ENCODE measurements at regions of chrX and their contacts with region 1.

Region 1: DNA sequence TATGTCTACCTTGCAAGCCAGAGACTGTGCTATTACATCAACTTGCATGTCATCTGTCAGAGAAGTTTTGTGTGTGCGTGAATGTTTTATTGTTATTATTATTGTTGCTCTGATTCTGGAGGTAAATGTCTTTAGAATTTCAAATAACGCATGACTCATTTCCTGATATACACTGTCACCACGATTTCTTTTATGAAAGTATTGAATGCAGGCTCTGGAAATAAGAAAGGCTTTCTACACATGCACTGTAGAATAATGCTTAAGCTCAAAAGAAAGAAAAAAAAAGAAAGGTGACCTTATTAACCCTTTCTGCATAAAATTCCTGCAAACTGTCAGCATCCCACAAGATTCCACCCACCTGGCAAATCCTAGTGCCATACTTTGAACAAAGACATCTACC is 632.9 kb downstream of the ZNF674 start:
- DNase-seq: no peak
- H3K4me3 ChIP-seq: no peak overlapping the region
- H3K27ac ChIP-seq: no peak overlapping the region
- H3K4me1 ChIP-seq: no peaks in the 10 kb centered on the region
- H3K27me3 ChIP-seq: peaks cover 0 to 28% of the 10 kb centered on the region in 2 donors
- CTCF ChIP-seq: no peak
- POLR2A ChIP-seq: no peak

Region 2: GRCh38 chrX:45422216-45422925 is 489.9 kb before region 1 on chrX:
- intact Hi-C with region 1: no loop called
- DNase-seq: no peak
- H3K4me3 ChIP-seq: no peak overlapping the region
- H3K27ac ChIP-seq: no peak overlapping the region
- H3K4me1 ChIP-seq: no peaks in the 10 kb centered on the region
- H3K27me3 ChIP-seq: peaks cover 0 to 32% of the 10 kb centered on the region in 2 donors
- CTCF ChIP-seq: no peak
- POLR2A ChIP-seq: no peak

Region 3: DNA sequence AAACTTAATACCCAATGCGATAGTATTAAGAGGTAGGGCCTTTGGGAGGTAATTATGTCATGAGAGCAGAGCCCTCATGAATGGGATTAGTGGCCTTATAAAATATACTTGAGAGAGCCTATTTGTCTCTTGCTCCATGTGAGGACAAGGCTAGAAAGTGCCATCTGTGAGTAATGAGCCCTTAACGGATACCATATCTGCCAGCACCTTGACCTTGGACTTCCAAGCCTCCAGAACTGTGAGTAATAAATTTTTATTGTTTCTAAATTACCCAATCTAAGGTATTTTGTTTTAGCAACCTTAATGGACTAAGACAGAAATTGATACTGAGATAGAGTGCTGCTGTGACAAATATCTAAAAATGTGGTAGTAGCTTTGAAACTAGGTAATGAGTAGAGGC is 426.6 kb before region 1 on chrX:
- intact Hi-C with region 1: loop called (anchors 5 kb)
- DNase-seq: no peak
- H3K4me3 ChIP-seq: no peak overlapping the region
- H3K27ac ChIP-seq: no peak overlapping the region
- H3K4me1 ChIP-seq: no peaks in the 10 kb centered on the region
- H3K27me3 ChIP-seq: peaks cover 0 to 5% of the 10 kb centered on the region in 2 donors
- CTCF ChIP-seq: no peak
- POLR2A ChIP-seq: no peak

Region 4: DNA sequence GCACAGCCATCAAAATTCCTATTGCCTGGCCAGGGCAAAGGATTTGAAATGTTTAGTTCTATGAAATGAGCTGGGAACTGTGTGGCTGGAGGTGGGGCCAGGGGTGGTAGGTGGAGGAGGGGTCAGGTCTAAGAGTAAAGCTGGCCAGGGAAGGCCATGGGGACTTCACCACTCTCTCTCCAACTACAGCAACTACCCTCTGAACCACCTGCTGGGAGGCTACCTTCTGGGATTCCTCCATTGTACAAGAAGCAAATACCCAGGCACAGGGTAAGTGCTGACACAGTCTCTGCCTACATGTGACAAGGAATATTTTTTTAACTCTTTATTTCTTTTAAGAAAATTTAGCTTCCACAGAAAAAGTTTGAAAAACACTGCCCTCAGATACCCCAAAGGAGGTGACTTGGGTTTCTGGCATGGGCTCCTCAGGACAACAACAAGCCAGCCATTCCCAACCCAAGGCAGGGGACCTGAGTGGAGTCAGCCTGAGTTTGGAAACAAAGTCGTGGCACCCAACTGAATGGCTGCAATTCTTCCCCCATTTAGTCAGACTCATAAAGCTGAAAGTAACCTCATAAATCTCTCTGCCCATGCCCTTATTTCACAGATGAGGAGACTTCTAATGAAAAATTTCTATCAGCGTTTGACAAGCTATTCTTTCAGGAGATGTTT is 117.9 kb before region 1 on chrX:
- intact Hi-C with region 1: no loop called
- DNase-seq: no peak
- H3K4me3 ChIP-seq: no peak overlapping the region
- H3K27ac ChIP-seq: no peak overlapping the region
- H3K4me1 ChIP-seq: no peaks in the 10 kb centered on the region
- H3K27me3 ChIP-seq: peaks cover 0 to 14% of the 10 kb centered on the region in 2 donors
- CTCF ChIP-seq: no peak
- POLR2A ChIP-seq: no peak